ENCODE measurements at regions of chr5 and their contacts with region 1.

Region 1: GRCh38 chr5:140564196-140565023 is at the starts of genes APBB3 and SLC35A4:
- DNase-seq: peak; percentile 96 to 98 (median 98)
- ATAC-seq: peak; percentile 94 to 96 (median 94)
- H3K4me3 ChIP-seq: peak within 1 kb of the TSS; percentile 57 to 89 (median 76)
- H3K27ac ChIP-seq: peak within 1 kb of the TSS; percentile 90 to 97 (median 94)
- H3K4me1 ChIP-seq: peaks cover 9 to 64% (median 45%) of the 10 kb centered on the region in 12 donors
- H3K27me3 ChIP-seq: no peaks in the 10 kb centered on the region
- CTCF ChIP-seq: no peak
- POLR2A ChIP-seq: peak in 1 of 2 donors; percentile 83
- total RNA-seq, gene APBB3: 3.6 to 23.1 (median 11.4) TPM
- total RNA-seq, gene SLC35A4: 55.5 to 92.1 (median 75.9) TPM

Region 2: GRCh38 chr5:140547508-140548299 is 16.7 kb before region 1 on chr5 and contains the start of gene EIF4EBP3:
- intact Hi-C with region 1: loop called in 2 of 10 experiments (anchors 1 kb)
- DNase-seq: peak; percentile 97 to 98 (median 98)
- ATAC-seq: peak; percentile 90 to 96 (median 94)
- H3K4me3 ChIP-seq: peak within 1 kb of the TSS; percentile 25 to 65 (median 54)
- H3K27ac ChIP-seq: peak within 1 kb of the TSS; percentile 83 to 98 (median 94)
- H3K4me1 ChIP-seq: peaks cover 14 to 50% (median 43%) of the 10 kb centered on the region in 12 donors
- H3K27me3 ChIP-seq: no peaks in the 10 kb centered on the region
- CTCF ChIP-seq: peak; percentile 35 to 81 (median 56)
- POLR2A ChIP-seq: peak in 1 of 2 donors; percentile 83
- total RNA-seq, gene EIF4EBP3: 4.7 to 34.9 (median 14.6) TPM

Region 3: DNA sequence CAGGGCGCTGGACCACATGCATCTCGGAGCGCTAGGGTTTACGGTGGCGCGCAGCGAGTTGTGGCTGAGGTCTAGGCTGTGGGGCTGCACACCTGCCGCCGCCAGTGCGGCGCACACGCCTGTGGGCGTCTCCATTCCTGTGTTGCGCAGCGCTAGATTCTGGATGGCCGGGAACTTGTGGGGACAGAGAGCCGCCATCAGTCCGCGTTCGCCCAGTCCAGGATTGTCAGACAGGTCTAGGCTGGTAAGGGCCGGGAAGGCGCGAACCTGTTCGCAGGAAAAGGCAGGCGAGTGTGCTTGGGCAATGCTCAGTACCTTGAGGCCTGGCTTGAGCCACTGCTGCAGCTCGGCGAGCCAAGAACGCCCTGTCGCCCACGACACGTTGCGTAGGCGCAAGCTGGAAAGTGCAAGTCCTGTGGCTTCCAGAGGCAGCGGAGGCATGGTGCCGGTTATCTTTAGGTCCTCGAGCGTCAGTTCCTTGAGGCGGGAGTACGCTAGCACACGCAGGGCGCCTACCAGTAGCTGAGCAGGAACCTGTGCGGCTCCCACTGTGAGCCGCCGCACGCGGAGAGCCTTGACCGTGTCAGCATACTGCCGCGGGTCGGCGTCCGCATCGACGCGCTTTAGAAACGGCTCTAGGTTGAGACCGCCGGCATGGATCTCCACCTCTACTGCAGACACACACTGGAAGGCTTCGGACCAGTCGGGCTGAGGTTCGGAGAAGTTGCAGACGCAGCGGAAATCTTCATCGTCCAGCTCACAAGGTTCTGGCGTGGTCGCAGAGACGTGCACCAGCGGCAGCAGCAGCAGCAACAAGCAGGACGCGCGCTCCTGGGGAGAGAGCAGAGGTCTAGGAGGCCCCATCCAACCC is 68.0 kb after region 1 on chr5:
- intact Hi-C with region 1: loop called in 5 of 10 experiments (anchors 2 to 5 kb)
- DNase-seq: peak; percentile 52 to 85 (median 71)
- ATAC-seq: peak; percentile 60 to 82 (median 77)
- H3K4me3 ChIP-seq: peak overlapping the region; percentile 32 to 67 (median 57)
- H3K27ac ChIP-seq: peak overlapping the region in 11 of 12 donors; percentile 50 to 95 (median 71)
- H3K4me1 ChIP-seq: peaks cover 0 to 39% (median 16%) of the 10 kb centered on the region in 12 donors
- H3K27me3 ChIP-seq: no peaks in the 10 kb centered on the region
- CTCF ChIP-seq: no peak
- POLR2A ChIP-seq: peak in 1 of 2 donors; percentile 15

Region 4: DNA sequence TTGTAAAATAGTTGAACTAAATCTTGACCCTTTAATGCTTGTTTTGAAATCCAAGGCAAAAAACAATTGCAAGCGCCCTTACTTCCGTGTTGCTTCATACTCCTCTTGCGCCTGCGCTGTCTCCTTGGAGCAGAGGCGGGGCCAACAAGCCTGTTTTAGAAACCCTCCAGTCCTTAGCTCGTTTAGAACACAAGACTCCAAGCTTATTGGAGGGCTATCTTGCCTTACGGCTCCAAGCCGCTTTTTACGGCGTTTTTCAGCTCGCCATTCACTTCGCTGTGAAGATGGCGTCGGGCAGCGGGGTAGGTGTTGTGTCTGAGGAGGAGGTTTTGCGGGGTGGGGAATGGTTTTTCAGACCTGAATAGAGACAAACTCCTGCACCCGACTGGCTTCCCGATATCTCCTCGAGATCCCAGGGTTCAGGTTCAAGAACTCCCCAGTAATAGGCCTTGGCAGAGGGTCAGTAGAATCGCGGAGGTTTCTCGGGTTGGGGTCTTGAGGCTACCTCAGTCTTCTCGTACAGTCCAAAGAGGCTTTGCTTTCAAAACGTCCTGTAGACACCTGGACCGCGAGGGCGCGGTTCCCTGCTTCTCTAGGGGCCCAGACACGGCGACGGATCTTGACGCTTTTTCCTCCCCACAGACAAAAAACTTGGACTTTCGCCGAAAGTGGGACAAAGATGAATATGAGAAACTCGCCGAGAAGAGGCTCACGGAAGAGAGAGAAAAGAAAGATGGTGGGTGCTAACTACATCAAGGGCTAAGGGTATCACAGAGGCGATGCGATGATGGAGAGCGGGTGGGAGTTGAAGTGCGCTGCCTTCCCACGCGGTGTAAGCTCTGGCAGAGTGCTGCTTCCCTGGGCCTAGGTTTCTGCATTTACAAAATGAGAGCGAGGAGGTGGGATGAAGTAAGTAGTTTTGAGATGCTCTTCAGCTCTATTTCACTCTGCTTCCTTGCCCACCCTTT is 136.1 kb after region 1 on chr5 and contains the start of gene ZMAT2:
- intact Hi-C with region 1: loop called in 2 of 10 experiments (anchors 5 to 10 kb)
- DNase-seq: peak; percentile 94 to 96 (median 95)
- ATAC-seq: peak; percentile 98 to 100 (median 99)
- H3K4me3 ChIP-seq: peak within 1 kb of the TSS; percentile 49 to 97 (median 83)
- H3K27ac ChIP-seq: peak within 1 kb of the TSS in 11 of 12 donors; percentile 47 to 74 (median 64)
- H3K4me1 ChIP-seq: peaks cover 0 to 19% (median 14%) of the 10 kb centered on the region in 12 donors
- H3K27me3 ChIP-seq: no peaks in the 10 kb centered on the region
- CTCF ChIP-seq: no peak
- POLR2A ChIP-seq: peak in 1 of 2 donors; percentile 79
- total RNA-seq, gene ZMAT2: 25.0 to 39.5 (median 33.9) TPM

Region 5: DNA sequence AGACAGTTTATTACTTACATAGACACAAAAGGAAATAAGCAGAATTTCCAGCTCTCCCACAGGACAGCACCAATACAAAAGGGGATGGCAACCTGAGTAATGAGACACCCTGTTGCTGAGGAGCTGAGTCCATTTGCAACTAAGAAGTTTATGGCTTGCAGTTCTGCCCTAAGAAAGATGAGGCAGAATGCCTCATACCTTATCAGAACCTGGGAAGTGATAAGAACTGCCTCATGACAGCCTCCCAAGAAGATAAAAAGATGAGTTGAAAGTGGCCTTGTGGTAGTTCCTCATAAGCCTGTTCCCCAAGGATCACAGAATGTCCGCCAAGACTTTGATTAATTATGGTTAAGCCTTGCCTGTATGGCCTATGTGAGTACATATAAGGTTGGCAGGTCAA is 177.6 kb after region 1 on chr5:
- intact Hi-C with region 1: no loop called
- DNase-seq: no peak
- ATAC-seq: no peak
- H3K4me3 ChIP-seq: no peak overlapping the region
- H3K27ac ChIP-seq: no peak overlapping the region
- H3K4me1 ChIP-seq: no peaks in the 10 kb centered on the region
- H3K27me3 ChIP-seq: peaks cover 0 to 16% (median 0%) of the 10 kb centered on the region in 9 donors
- CTCF ChIP-seq: no peak
- POLR2A ChIP-seq: no peak

Measured in heart left ventricle (tissue), 16 donors.